ENCODE measurements at regions of chr16 and their contacts with region 1.

Region 1: DNA sequence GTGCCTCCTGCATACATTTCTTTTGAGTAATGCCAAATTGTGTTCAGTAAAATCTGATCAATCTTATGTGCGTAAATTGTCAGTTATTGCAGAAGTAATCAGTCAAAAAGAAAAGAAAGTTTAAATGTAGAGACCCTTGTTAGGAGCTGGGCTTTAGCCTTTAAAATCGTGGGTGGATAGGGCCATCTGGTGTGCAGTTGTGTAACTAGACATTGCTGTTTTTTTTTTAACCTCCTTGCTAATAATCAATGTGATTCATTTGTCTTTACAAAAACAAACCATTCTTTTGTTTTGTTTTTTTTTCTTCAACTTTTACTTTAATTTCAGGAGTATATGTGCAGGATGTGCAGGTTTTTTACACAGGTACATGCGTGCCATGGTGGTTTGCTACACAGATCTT is 5.3 kb upstream of the WWOX start:
- DNase-seq: peak in 1 of 2 experiments; percentile 34
- H3K4me3 ChIP-seq: no peak overlapping the region
- H3K4me3 Mint-ChIP-seq: no peak overlapping the region
- H3K27ac Mint-ChIP-seq: no peak overlapping the region
- H3K4me1 ChIP-seq: no peaks in the 10 kb centered on the region
- H3K4me1 Mint-ChIP-seq: peaks cover 7% of the 10 kb centered on the region
- H3K27me3 ChIP-seq: no peaks in the 10 kb centered on the region
- H3K27me3 Mint-ChIP-seq: peaks cover 2% of the 10 kb centered on the region
- CTCF ChIP-seq: peak in 1 of 2 experiments; percentile 45

Region 2: GRCh38 chr16:77951775-77952174 is 142.4 kb before region 1 on chr16:
- CTCF ChIA-PET with region 1: interaction called, 13 read pairs
- POLR2A ChIA-PET with region 1: no interaction called
- intact Hi-C with region 1: loop called (anchors 1 kb)
- DNase-seq: peak in 1 of 2 experiments; percentile 65
- H3K4me3 ChIP-seq: no peak overlapping the region
- H3K4me3 Mint-ChIP-seq: no peak overlapping the region
- H3K27ac Mint-ChIP-seq: no peak overlapping the region
- H3K4me1 ChIP-seq: no peaks in the 10 kb centered on the region
- H3K4me1 Mint-ChIP-seq: no peaks in the 10 kb centered on the region
- H3K27me3 ChIP-seq: no peaks in the 10 kb centered on the region
- H3K27me3 Mint-ChIP-seq: peaks cover 20% of the 10 kb centered on the region
- CTCF ChIP-seq: peak; percentile 47 to 74

Region 3: DNA sequence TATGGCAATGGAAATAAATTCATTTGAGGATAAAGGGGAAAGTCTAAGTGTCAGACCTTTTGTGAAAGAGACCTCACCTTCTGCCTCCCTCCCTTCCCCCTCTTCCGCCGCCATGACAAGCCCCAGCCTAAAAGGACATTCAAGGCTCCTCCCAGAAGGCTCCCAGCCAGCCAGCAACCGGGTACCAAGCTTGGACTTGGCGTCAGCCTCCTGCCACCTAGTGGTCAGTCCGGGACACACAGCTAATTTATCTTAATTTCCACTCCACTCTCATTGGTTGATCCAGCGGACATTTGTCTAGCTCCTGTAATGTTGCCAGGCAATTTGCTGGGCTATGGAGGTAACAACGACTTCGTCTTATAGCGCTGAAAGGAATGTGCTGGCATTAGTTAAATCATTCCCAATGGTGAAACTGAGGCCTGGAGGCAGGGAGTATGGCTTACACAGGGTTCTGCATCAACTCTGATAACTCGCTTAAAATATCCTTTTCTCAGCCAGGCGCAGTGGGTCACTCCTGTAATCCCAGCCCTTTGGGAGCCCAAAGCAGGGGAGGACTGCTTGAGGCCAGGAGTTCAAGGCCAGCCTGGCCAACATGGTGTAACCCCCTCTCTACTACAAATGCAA is 91.1 kb before region 1 on chr16:
- CTCF ChIA-PET with region 1: interaction called, 8 read pairs
- POLR2A ChIA-PET with region 1: no interaction called
- intact Hi-C with region 1: loop called (anchors 1 kb)
- DNase-seq: peak; percentile 84 to 87
- H3K4me3 ChIP-seq: no peak overlapping the region
- H3K4me3 Mint-ChIP-seq: no peak overlapping the region
- H3K27ac Mint-ChIP-seq: no peak overlapping the region
- H3K4me1 ChIP-seq: no peaks in the 10 kb centered on the region
- H3K4me1 Mint-ChIP-seq: no peaks in the 10 kb centered on the region
- H3K27me3 ChIP-seq: no peaks in the 10 kb centered on the region
- H3K27me3 Mint-ChIP-seq: no peaks in the 10 kb centered on the region
- CTCF ChIP-seq: peak; percentile 75 to 84

Region 4: GRCh38 chr16:78060293-78060692 is 33.9 kb before region 1 on chr16:
- CTCF ChIA-PET with region 1: interaction called, 12 read pairs
- POLR2A ChIA-PET with region 1: no interaction called
- intact Hi-C with region 1: loop called (anchors 1 kb)
- DNase-seq: peak in 1 of 2 experiments; percentile 25
- H3K4me3 ChIP-seq: no peak overlapping the region
- H3K4me3 Mint-ChIP-seq: peak overlapping the region; percentile 16
- H3K27ac Mint-ChIP-seq: peak overlapping the region; percentile 75
- H3K4me1 ChIP-seq: peaks cover 15% of the 10 kb centered on the region
- H3K4me1 Mint-ChIP-seq: peaks cover 25% of the 10 kb centered on the region
- H3K27me3 ChIP-seq: no peaks in the 10 kb centered on the region
- H3K27me3 Mint-ChIP-seq: no peaks in the 10 kb centered on the region
- CTCF ChIP-seq: peak; percentile 16 to 39

Measured in Caco-2 (cell line).